ENCODE measurements at regions of chr13 and their contacts with region 1.

Region 1: DNA sequence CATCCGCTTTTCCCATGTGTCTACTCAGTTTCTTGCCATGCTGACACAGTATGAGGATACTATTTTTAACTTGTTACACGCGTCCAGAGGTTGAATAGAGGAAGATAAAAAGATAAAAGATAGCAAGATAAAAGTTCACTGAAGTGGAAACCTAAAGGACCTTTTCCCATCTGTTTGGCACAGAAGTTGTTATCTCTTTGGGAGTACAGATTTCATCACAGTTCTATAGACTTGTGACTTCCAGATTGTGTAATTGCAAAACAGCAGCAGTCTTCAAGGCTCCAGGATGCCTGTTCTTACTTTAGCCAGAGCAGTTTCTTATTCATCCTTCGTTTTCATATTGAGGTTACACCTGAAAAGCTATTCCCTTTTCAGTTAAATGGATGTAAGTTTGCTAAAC is 369.2 kb downstream of the GPC5 start:
- DNase-seq: peak; percentile 52 to 60
- H3K4me3 ChIP-seq: no peak overlapping the region
- H3K4me3 Mint-ChIP-seq: peak overlapping the region; percentile 21
- H3K27ac Mint-ChIP-seq: peak overlapping the region; percentile 7
- H3K4me1 ChIP-seq: peaks cover 86% of the 10 kb centered on the region
- H3K4me1 Mint-ChIP-seq: peaks cover 53% of the 10 kb centered on the region
- H3K27me3 ChIP-seq: no peaks in the 10 kb centered on the region
- H3K27me3 Mint-ChIP-seq: no peaks in the 10 kb centered on the region
- CTCF ChIP-seq: no peak

Region 2: DNA sequence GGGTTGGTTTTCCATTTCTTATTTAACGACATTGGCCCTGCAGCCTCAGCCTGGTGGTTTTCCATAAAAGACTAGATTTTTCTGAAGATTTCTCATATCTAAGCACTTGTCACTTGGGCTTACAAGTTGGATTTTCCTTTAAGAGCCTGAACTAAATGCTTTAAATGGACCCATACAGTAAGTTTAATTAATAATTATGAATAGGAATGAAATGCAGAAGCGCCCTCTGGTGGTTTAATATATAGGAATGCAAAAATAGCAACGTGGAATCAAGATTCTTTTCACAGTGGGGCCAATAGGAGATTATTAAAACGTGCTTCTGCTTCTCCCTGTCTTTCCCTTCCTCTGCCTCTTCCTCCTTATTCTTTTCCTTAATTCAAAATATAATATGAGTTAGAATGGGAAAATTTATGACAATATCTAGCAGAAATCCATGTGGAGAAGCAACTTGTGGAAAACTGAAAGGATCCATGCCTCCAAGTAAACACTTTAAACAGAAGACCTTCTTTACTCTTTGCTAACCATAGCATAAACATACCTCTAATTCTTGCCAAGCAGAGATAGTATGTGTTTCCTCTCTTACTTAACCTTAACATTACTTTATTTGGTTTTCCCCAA is 45.3 kb before region 1 on chr13:
- CTCF ChIA-PET with region 1: no interaction called
- POLR2A ChIA-PET with region 1: no interaction called
- intact Hi-C with region 1: loop called (anchors 1 kb)
- DNase-seq: peak in 1 of 2 experiments; percentile 21
- H3K4me3 ChIP-seq: no peak overlapping the region
- H3K4me3 Mint-ChIP-seq: no peak overlapping the region
- H3K27ac Mint-ChIP-seq: no peak overlapping the region
- H3K4me1 ChIP-seq: peaks cover 43% of the 10 kb centered on the region
- H3K4me1 Mint-ChIP-seq: peaks cover 13% of the 10 kb centered on the region
- H3K27me3 ChIP-seq: no peaks in the 10 kb centered on the region
- H3K27me3 Mint-ChIP-seq: no peaks in the 10 kb centered on the region
- CTCF ChIP-seq: peak; percentile 53 to 63

Region 3: DNA sequence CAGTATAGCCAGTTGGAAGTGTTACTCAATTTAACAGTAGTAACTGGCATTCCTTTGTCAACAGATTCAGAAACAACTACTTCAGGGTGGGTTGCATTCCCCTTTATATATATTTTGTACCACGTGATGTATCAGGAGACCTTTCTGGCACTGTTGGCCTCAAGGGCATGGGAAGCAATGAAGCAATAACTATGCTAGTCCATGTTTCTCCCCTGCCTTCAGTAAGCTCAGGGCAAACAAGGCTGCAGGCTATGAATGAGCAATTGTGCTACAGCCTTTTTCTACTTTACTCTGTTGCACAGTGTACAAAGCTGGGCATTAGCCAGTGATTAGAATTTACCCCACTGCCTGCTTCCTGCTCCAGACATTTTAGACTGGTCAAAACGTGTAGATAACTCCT is 20.5 kb before region 1 on chr13:
- CTCF ChIA-PET with region 1: no interaction called
- POLR2A ChIA-PET with region 1: no interaction called
- intact Hi-C with region 1: loop called (anchors 2 kb)
- DNase-seq: peak; percentile 26 to 44
- H3K4me3 ChIP-seq: no peak overlapping the region
- H3K4me3 Mint-ChIP-seq: no peak overlapping the region
- H3K27ac Mint-ChIP-seq: no peak overlapping the region
- H3K4me1 ChIP-seq: peaks cover 23% of the 10 kb centered on the region
- H3K4me1 Mint-ChIP-seq: no peaks in the 10 kb centered on the region
- H3K27me3 ChIP-seq: no peaks in the 10 kb centered on the region
- H3K27me3 Mint-ChIP-seq: no peaks in the 10 kb centered on the region
- CTCF ChIP-seq: no peak

Region 4: GRCh38 chr13:92054389-92054788 is 286.7 kb after region 1 on chr13:
- CTCF ChIA-PET with region 1: no interaction called
- POLR2A ChIA-PET with region 1: no interaction called
- intact Hi-C with region 1: loop called (anchors 1 kb)
- DNase-seq: peak in 1 of 2 experiments; percentile 56
- H3K4me3 ChIP-seq: no peak overlapping the region
- H3K4me3 Mint-ChIP-seq: no peak overlapping the region
- H3K27ac Mint-ChIP-seq: no peak overlapping the region
- H3K4me1 ChIP-seq: peaks cover 11% of the 10 kb centered on the region
- H3K4me1 Mint-ChIP-seq: peaks cover 6% of the 10 kb centered on the region
- H3K27me3 ChIP-seq: no peaks in the 10 kb centered on the region
- H3K27me3 Mint-ChIP-seq: no peaks in the 10 kb centered on the region
- CTCF ChIP-seq: no peak

Measured in Caco-2 (cell line).